AG04450 (cell line): ENCODE measurements at regions of chr20 and their contacts with region 1.

Region 1: DNA sequence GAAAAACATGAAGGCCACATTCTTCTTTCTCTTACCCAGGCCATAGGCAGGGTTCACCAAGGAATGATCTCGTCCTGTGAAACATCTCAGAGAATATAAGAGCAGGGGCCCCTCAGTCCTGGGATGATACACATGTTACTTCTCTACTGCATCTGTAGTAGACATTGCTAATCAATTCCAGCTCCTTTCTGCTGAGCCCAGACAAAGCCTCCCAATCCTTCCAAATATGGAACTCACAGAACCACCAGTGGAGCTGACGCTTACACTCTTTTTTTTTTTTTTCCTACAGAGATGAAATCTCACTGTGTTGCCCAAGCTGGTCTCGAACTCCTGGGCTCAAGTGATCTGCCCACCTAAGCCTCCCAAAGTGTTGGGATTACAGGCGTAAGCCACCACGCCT is 9.1 kb downstream of the SNTA1 start:
- DNase-seq: no peak
- H3K4me3 ChIP-seq: no peak overlapping the region
- H3K27ac ChIP-seq: no peak overlapping the region
- H3K27me3 ChIP-seq: no peaks in the 10 kb centered on the region
- CTCF ChIP-seq: no peak

Region 2: GRCh38 chr20:33009214-33010132 is 425.0 kb before region 1 on chr20:
- CTCF ChIA-PET with region 1: no interaction called
- POLR2A ChIA-PET with region 1: no interaction called
- DNase-seq: no peak
- H3K4me3 ChIP-seq: no peak overlapping the region
- H3K27ac ChIP-seq: no peak overlapping the region
- H3K27me3 ChIP-seq: peaks cover 7% of the 10 kb centered on the region
- CTCF ChIP-seq: no peak

Region 3: DNA sequence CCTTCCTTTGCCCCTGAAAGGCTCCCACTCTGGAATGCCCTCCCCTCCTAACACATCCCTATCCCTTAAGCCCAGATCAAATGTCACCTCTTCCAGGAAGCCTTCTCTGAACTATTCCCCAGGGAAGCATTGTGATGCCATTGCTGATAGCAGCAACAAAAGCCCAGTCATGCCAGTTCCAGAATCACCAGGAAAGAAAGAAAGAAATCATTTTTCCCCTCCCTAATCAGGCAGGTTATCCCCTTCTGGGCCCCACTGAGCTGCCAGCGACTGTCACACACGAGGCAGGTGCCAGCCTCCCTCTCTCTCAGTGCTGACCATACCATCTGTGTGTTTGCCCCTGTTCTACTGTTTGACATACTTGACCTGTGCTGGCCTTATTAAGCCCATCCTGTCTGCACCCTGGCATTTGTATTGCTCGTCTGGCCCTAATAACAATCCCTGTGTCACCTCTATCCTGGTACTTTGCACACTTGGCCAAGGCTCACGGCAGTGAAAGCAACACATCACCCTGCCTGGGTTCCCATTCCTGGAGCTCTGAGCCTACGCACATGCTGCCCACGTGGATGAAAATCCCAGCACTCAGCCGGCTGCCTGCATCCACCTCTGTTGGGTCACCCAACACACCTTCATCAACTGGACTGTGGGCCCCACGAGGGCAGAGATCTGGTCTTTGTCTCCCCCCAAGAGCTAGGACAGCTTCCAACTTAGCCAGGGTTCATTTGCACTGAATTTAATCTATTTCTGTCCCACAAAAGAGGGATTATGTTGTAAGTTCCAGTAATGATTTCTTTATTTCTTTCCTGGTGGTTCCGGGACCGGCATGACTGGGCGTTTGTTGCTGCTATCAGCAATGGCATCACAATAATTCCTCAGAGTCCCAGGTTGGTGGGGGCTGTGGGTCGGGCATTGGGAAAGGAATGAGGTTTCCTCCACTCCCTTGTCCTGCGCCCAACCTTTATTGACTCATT is 156.7 kb before region 1 on chr20:
- CTCF ChIA-PET with region 1: no interaction called
- POLR2A ChIA-PET with region 1: no interaction called
- DNase-seq: no peak
- H3K4me3 ChIP-seq: no peak overlapping the region
- H3K27ac ChIP-seq: no peak overlapping the region
- H3K27me3 ChIP-seq: peaks cover 13% of the 10 kb centered on the region
- CTCF ChIP-seq: no peak

Region 4: DNA sequence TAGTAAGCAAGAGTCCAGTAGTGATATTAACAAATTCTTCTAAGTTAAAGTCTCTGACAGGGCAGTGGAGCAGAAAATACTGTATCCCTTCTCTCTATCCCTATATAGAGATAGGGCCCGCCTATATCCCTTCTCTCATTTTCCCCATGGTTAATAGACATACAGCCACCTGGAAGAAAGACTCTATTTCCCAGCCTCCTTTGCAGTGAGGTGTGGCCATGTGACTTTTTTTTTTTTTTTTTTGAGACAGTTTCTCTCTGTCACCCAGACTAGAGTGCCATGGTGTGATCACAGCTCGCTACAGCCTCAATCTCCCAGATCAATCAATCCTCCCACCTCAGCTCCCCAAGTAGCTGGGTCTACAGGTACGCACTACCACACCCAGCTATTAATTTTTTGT is 16.4 kb before region 1 on chr20:
- CTCF ChIA-PET with region 1: no interaction called
- POLR2A ChIA-PET with region 1: no interaction called
- DNase-seq: no peak
- H3K4me3 ChIP-seq: no peak overlapping the region
- H3K27ac ChIP-seq: no peak overlapping the region
- H3K27me3 ChIP-seq: no peaks in the 10 kb centered on the region
- CTCF ChIP-seq: no peak

Region 5: DNA sequence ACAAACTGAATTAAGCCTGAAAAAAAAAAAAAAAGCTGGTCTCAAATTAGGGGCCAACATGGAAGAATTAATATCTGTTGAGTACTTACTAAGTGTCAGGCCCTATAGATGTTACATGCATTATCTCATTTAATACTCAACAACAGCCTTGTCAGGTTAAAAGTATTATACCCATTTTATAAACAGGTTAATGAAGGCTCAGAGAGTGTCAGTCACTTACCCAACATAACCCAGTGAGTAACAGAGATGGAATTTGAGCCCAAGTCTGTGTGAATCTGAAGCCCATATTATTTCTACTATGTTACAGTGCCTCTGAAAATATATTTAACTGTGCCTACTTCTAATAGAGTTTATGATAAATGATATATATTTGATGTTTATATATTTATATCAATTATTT is 688.9 kb after region 1 on chr20:
- CTCF ChIA-PET with region 1: no interaction called
- POLR2A ChIA-PET with region 1: interaction called, 10 read pairs
- DNase-seq: no peak
- H3K4me3 ChIP-seq: no peak overlapping the region
- H3K27ac ChIP-seq: no peak overlapping the region
- H3K27me3 ChIP-seq: peaks cover 16% of the 10 kb centered on the region
- CTCF ChIP-seq: no peak